Mammary epithelial cell (primary cell): ENCODE measurements at regions of chr3 and their contacts with region 1.

Region 1: GRCh38 chr3:119637679-119638525 is 22.5 kb downstream of the POPDC2 start:
- DNase-seq: peak; percentile 87
- H3K4me3 ChIP-seq: no peak overlapping the region
- H3K27ac ChIP-seq: peak overlapping the region; percentile 69
- H3K4me1 ChIP-seq: peaks cover 30% of the 10 kb centered on the region
- H3K27me3 ChIP-seq: no peaks in the 10 kb centered on the region
- CTCF ChIP-seq: no peak

Region 2: GRCh38 chr3:119600732-119601131 is 37.2 kb before region 1 on chr3:
- CTCF ChIA-PET with region 1: no interaction called
- dilution Hi-C with region 1: no loop called
- in situ Hi-C with region 1: no loop called
- intact Hi-C with region 1: loop called (anchors 2 kb)
- DNase-seq: no peak
- H3K4me3 ChIP-seq: no peak overlapping the region
- H3K27ac ChIP-seq: no peak overlapping the region
- H3K4me1 ChIP-seq: no peaks in the 10 kb centered on the region
- H3K27me3 ChIP-seq: no peaks in the 10 kb centered on the region
- CTCF ChIP-seq: peak in 1 of 2 donors; percentile 52